ENCODE measurements at regions of chr4 and their contacts with region 1.

Region 1: DNA sequence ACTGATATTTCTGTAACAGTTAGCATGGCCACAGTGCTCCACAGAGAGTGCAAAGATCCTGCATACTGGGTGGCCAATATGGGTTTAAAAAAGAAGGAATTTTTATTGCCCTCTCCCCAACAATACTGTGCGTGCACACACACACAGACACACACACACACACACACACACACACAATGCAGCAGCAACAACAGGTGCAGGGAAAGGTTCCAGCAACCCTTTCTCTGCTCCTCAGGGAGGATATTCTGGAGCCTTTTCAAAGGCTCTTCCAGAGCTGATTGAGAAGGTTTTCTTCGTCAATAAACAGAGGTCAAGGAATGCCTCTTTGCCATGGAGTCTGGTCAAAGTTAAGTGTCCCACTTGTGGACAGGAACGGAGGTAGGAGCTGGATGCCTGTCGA is 84.8 kb upstream of the ZFP42 start:
- DNase-seq: no peak
- ATAC-seq: no peak
- H3K4me3 ChIP-seq: no peak overlapping the region
- H3K27ac ChIP-seq: no peak overlapping the region
- H3K4me1 ChIP-seq: no peaks in the 10 kb centered on the region
- H3K27me3 ChIP-seq: no peaks in the 10 kb centered on the region
- CTCF ChIP-seq: no peak
- POLR2A ChIP-seq: no peak

Region 2: DNA sequence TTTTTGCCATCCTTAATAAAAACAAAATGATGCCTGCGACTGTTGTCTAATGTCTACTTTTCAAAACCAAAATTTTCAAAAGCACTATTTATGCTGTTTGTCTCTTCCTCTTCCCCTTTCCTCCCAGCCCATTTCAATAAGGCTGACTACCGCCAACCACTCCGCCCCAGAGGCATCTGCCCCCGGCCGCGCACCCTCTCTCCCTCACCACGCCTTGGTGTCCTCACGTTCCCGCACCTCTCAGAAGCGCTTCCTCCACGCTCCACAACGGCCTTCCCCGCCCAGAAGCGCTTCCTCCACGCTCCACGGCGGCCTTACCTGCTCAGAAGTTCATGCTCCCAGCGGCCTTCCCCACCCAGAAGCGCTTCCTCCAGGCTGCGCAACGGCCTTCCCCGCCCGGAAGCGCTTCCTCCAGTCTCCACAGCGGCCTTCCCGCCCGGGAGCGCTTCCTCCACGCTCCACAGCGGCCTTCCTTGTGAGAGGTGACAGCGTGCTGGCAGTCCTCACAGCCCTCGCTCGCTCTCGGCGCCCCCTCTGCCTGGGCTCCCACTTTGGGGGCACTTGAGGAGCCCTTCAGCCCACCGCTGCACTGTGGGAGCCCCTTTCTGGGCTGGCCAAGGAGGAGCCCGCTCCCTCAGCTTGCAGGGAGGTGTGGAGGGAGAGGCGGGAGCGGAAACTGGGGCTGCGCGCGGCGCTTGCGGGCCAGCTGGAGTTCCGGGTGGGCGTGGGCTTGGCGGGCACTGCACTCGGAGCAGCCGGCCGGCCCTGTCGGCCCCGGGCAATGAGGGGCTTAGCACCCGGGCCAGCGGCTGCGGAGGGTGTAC is 405.6 kb before region 1 on chr4:
- intact Hi-C with region 1: no loop called
- DNase-seq: no peak
- ATAC-seq: no peak
- H3K4me3 ChIP-seq: peak overlapping the region in 3 of 12 donors; percentile 10 to 21 (median 19)
- H3K27ac ChIP-seq: no peak overlapping the region
- H3K4me1 ChIP-seq: no peaks in the 10 kb centered on the region
- H3K27me3 ChIP-seq: no peaks in the 10 kb centered on the region
- CTCF ChIP-seq: no peak
- POLR2A ChIP-seq: no peak

Region 3: GRCh38 chr4:188372826-188373225 is 462.1 kb after region 1 on chr4:
- intact Hi-C with region 1: loop called in 1 of 10 experiments (anchors 5 kb)
- DNase-seq: no peak
- ATAC-seq: peak in 2 of 4 donors; percentile 36 to 52
- H3K4me3 ChIP-seq: no peak overlapping the region
- H3K27ac ChIP-seq: no peak overlapping the region
- H3K4me1 ChIP-seq: no peaks in the 10 kb centered on the region
- H3K27me3 ChIP-seq: no peaks in the 10 kb centered on the region
- CTCF ChIP-seq: peak in 3 of 12 donors; percentile 13 to 30 (median 28)
- POLR2A ChIP-seq: no peak

Measured in heart left ventricle (tissue), 16 donors.